ENCODE measurements at regions of chr6 and their contacts with region 1.

Region 1: DNA sequence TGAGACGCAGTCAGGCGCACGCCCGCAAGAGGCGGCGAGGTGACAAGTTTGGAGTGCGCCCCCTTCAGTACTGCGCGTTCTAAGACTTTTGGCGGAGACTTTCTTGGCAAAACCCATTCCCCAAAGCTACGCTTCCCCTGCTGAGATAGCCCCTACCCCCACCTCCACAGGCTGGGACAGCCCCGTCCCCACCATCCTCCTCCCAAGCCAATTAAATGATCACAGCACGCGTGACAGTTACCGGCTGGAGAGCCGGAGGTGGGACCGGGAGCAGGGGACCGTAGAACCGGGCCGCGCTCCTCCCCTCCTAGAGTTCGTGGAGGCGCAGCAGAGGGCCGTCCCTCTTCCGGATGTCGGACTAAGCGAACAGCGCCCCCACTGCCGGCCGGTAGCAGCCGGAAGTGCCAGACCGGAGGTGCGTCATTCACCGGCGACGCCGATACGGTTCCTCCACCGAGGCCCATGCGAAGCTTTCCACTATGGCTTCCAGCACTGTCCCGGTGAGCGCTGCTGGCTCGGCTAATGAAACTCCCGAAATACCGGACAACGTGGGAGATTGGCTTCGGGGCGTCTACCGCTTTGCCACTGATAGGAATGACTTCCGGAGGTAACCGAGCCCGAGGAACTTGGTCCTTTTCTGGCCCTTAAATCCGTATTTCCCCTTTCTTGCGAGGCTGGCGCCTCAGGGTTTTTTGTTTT is at the start of gene TOMM6:
- DNase-seq: peak; percentile 92 to 93
- ATAC-seq: peak; percentile 91 to 92
- H3K4me3 ChIP-seq: peak within 1 kb of the TSS; percentile 77 to 97 (median 88)
- H3K27ac ChIP-seq: peak within 1 kb of the TSS; percentile 92 to 96 (median 94)
- H3K4me1 ChIP-seq: peaks cover 21 to 24% of the 10 kb centered on the region in 2 donors
- H3K27me3 ChIP-seq: no peaks in the 10 kb centered on the region
- CTCF ChIP-seq: peak; percentile 94 to 97 (median 95)
- POLR2A ChIP-seq: peak; percentile 76 to 77
- total RNA-seq, gene TOMM6: 152 to 186 (median 166) TPM

Region 2: DNA sequence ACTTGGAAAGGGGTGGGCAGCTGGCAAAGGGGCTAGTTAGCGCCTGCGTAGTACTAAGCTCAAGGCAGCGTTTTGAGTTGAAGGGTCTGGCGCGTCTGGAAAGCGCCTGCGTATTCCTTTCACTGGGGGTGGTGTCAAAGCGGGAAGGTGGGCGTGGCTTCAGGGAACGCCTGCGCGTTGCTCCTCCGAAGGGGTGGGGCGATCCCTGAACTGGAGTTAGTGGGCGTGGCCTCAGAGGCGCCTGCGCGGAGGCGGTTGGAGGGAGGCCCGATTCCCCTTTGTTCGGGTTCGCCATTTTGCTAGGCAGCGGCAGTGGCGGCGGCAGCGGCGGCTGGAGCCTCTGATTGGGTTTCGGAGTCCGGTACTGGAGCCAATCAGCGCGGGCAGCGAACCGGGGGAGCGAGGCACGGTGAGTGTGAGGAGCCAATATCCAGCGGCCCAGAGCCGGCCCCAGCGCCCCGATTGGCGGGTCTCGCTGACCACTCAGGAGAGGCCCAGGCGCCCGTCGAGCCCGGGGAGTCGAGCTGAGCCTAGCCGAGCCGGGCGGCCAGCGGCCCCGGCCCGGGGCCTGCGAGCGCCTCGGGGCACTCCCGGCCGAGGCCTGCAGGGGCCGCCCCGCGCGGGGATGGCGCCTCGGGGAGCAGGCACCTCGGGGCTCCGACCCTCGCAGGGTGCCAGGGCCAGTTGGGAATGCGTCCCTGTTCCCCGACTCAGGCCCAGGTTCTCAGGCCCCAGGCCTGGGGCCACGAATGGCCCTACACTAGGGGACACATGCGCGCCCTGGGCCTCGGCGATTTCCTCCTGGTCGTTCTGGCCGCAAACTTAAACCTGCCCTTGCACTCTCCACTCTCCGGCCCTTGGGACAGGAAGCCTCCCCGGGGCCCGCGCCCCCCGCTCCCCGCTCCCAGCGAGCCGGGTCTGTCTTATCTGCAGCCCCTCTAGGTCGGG is 714.4 kb before region 1 on chr6 and contains the start of gene NFYA:
- in situ Hi-C with region 1: no loop called
- intact Hi-C with region 1: loop called (anchors 10 kb)
- DNase-seq: peak; percentile 99
- ATAC-seq: peak; percentile 66 to 67
- H3K4me3 ChIP-seq: peak within 1 kb of the TSS; percentile 75 to 93 (median 82)
- H3K27ac ChIP-seq: peak within 1 kb of the TSS; percentile 97 to 99 (median 98)
- H3K4me1 ChIP-seq: peaks cover 34 to 47% of the 10 kb centered on the region in 2 donors
- H3K27me3 ChIP-seq: no peaks in the 10 kb centered on the region
- CTCF ChIP-seq: peak in 4 of 5 experiments; percentile 49 to 82 (median 62)
- POLR2A ChIP-seq: peak; percentile 97 to 98
- total RNA-seq, gene NFYA: 7.2 to 11.6 (median 9.7) TPM

Region 3: GRCh38 chr6:41693281-41694240 is 93.8 kb before region 1 on chr6:
- in situ Hi-C with region 1: no loop called
- intact Hi-C with region 1: no loop called
- DNase-seq: no peak
- ATAC-seq: no peak
- H3K4me3 ChIP-seq: no peak overlapping the region
- H3K27ac ChIP-seq: peak overlapping the region in 1 of 4 donors; percentile 2
- H3K4me1 ChIP-seq: peaks cover 59 to 62% of the 10 kb centered on the region in 2 donors
- H3K27me3 ChIP-seq: no peaks in the 10 kb centered on the region
- CTCF ChIP-seq: no peak
- POLR2A ChIP-seq: no peak

Region 4: DNA sequence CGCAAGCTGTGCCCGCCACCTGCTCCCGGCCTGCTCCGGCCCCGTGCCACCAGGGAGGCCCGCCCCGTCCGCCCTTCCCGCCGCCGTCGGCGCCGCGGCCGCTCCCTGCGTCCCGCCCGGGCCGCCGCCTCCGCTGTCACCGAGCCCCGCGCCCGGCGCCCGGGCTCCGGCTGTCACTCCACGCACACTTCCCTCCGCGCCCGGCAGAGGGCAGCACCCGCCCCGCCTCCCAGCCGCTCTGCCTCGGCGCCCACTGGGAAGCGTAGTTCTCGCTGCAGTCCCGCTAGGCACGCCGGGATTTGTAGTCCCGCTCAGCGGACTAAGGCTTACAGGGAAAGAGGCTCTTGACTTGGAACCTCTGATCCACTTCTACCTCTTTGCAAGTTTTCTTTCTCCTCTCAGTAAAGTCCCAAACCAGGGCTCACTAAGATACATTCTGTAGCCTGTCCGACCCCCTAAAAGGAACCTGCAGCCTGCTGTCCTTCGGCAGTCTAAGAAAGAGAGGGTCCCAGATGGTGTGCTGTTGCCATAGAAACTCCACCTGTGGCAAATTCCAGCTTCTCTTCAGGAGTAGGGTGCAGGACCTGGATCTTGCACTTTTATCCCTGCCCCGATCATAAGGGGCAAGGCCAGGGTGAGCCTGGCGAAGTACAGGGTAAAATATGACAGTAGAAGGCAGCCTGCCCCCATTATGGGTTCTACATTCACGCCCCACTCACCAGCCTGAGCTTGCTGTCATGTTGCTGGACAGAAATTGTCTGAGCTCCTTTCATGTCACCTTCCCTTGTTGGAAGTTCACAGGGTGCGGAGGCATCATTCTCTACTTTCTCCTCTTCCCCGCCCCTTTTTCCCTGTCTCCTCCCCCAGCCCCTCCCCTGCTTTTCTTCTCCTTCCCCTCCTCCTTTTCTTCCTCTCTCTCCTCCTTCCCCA is 51.7 kb before region 1 on chr6 and contains the start of gene TFEB:
- in situ Hi-C with region 1: no loop called
- intact Hi-C with region 1: loop called (anchors 2 kb)
- DNase-seq: peak; percentile 92 to 93
- ATAC-seq: peak; percentile 43 to 51
- H3K4me3 ChIP-seq: peak within 1 kb of the TSS; percentile 76 to 97 (median 90)
- H3K27ac ChIP-seq: peak within 1 kb of the TSS; percentile 97 to 99 (median 98)
- H3K4me1 ChIP-seq: peaks cover 12 to 19% of the 10 kb centered on the region in 2 donors
- H3K27me3 ChIP-seq: no peaks in the 10 kb centered on the region
- CTCF ChIP-seq: peak; percentile 91 to 100 (median 100)
- POLR2A ChIP-seq: peak; percentile 94 to 97
- total RNA-seq, gene TFEB: 82.8 to 121 (median 93.3) TPM

Region 5: DNA sequence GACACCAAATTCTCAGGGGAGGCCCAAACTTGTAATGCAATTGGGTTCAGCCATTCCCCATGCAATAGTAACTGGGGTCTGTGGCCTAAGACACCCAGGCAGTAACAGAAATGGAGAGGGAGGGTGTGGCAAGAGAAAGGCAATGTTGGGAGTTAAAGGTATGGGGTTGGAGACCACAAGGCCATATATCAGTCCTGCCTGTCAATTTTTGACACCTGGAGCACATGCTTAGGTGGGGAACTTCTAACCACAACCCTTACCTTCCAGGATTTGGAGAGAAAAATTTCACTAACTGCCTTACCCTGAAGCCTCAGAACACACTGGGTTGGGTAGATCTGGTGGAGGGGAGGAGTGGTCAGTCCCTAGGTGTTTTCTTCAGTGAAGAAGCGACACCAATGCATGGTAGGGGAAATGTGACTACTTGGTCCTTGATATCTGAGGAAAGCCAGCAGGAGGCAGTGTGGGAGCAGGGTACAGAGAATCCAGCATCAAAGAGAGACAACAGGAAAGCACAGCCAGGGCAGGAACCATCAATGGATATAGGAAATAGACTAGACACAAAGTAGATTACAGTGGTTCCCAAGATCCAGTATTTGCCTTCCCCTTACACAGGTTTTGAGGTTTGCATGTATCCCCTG is 114.6 kb after region 1 on chr6:
- in situ Hi-C with region 1: loop called in 1 of 4 experiments (anchors 10 kb)
- intact Hi-C with region 1: no loop called
- DNase-seq: no peak
- ATAC-seq: no peak
- H3K4me3 ChIP-seq: no peak overlapping the region
- H3K27ac ChIP-seq: no peak overlapping the region
- H3K4me1 ChIP-seq: no peaks in the 10 kb centered on the region
- H3K27me3 ChIP-seq: no peaks in the 10 kb centered on the region
- CTCF ChIP-seq: no peak
- POLR2A ChIP-seq: no peak

Region 6: DNA sequence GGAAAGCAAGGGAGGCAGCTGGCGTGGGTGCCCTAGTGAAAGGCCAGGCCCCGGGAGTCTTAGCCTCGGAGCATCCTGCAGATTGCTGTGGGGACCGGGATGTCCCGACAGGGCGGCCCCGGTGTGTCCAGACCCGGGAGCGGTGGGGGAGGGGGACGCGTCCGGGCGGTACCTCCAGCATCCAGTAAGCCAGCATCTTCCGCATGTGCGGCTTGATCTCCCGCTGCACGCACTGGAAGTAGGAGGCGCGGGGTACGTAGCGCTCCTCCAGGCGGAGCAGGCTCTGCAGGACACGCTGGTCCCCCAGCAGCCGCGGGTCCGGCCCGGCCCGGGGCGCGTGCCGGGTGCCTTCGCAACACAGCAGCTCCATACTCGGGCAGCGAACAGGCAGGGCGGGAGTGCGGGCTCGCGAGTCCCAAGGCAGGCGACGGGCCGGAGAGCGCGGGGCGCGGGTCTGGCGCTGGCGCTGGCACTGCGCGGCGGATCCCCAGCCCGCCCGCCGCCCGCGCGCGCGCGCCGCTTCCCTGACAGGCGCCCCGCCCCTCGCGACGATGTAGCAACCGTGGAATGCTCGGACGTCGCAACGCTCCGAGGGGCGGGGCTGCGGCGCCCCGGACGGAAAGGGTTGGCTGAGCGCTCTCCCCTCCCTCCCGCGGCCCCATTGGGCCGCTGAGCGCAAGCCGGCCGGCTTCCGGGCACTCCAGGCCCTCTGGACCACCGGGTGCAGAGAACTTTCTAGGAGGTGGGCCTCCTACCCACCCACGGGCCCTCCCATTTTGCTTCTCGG is 154.1 kb after region 1 on chr6 and contains the start of gene CCND3:
- in situ Hi-C with region 1: no loop called
- intact Hi-C with region 1: loop called (anchors 1 kb)
- DNase-seq: peak; percentile 78 to 84
- ATAC-seq: peak; percentile 92 to 94
- H3K4me3 ChIP-seq: peak within 1 kb of the TSS; percentile 66 to 97 (median 72)
- H3K27ac ChIP-seq: peak within 1 kb of the TSS; percentile 67 to 79 (median 74)
- H3K4me1 ChIP-seq: peaks cover 21 to 33% of the 10 kb centered on the region in 2 donors
- H3K27me3 ChIP-seq: no peaks in the 10 kb centered on the region
- CTCF ChIP-seq: peak in 1 of 5 experiments; percentile 16
- POLR2A ChIP-seq: peak; percentile 42 to 46
- total RNA-seq, gene CCND3: 28.9 to 48.7 (median 44.7) TPM

Region 7: GRCh38 chr6:42217519-42218367 is 430.4 kb after region 1 on chr6 and contains the start of gene MRPS10:
- in situ Hi-C with region 1: no loop called
- intact Hi-C with region 1: loop called (anchors 5 kb)
- DNase-seq: peak; percentile 91 to 94
- ATAC-seq: peak; percentile 100
- H3K4me3 ChIP-seq: peak within 1 kb of the TSS; percentile 73 to 89 (median 84)
- H3K27ac ChIP-seq: peak within 1 kb of the TSS; percentile 81 to 90 (median 86)
- H3K4me1 ChIP-seq: peaks cover 22 to 25% of the 10 kb centered on the region in 2 donors
- H3K27me3 ChIP-seq: no peaks in the 10 kb centered on the region
- CTCF ChIP-seq: no peak
- POLR2A ChIP-seq: peak; percentile 41 to 76
- total RNA-seq, gene MRPS10: 52.2 to 63.7 (median 56.0) TPM

Region 8: DNA sequence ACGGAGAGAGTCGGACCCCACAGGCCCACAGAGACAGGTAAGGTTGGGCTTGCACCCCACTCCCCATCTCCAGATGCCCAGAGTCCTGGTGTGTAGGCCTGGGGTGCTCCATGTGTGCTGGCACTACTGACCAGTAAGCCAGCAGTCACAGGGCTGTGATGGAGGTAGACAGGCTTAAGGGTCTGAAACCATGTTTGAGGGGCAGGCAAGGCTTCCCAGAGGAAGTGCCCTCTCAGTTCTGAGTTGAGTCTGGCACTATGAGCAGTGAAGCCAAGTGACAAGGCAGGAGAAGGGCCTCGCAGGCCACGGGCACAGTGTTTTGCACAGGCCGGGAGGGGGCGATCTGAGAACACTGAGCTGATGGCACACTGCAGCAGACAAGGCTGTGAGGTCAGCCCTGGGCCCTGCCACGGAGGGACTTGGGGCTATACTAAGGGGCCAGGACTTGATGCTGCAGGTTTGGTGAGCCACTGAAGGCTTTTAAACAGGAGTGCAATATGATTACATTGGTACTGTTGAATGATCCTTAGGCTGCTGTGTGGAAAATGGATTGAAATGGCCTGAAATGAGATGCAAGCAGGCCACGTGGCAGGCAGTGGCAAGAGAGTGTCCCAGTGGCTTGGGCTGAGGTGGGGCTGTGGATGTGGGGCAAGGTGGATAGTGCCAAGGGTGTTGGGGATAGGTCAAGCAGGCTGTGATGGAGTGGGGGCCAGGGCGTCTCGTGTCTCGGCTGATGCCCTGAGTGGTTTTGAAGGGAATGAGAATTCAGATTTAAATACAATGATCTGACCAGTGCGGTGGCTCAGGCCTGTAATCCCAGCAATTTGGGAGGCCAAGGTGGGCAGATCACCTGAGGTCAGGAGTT is 1476.2 kb after region 1 on chr6:
- in situ Hi-C with region 1: no loop called
- intact Hi-C with region 1: no loop called
- DNase-seq: peak in 1 of 2 donors; percentile 19
- ATAC-seq: peak in 1 of 2 donors; percentile 32
- H3K4me3 ChIP-seq: no peak overlapping the region
- H3K27ac ChIP-seq: no peak overlapping the region
- H3K4me1 ChIP-seq: no peaks in the 10 kb centered on the region
- H3K27me3 ChIP-seq: no peaks in the 10 kb centered on the region
- CTCF ChIP-seq: peak in 3 of 5 experiments; percentile 29 to 50 (median 39)
- POLR2A ChIP-seq: no peak